HEK293 (cell line): ENCODE measurements at regions of chr18 and their contacts with region 1.

Region 1: DNA sequence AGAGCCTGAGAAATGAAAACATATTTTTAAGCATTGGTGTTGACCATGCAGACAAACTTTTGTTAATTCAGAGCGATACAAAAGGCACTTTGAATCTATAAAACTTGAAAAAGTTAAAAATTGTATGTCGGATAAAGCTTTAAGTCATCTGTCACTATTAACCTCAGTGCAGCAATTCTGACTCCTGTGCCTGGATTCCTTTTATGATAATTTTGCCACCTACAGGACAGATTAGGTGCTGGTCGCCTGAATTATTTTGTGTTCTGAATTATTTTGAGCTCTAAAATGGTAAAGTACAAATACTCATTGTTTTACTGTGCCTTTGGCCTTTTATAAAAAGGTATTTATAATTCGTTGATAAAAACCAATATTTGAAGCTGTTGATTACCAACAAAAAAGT is 19.4 kb upstream of the RNF138 start:
- H3K4me3 ChIP-seq: no peak overlapping the region
- H3K27ac ChIP-seq: no peak overlapping the region
- H3K4me1 ChIP-seq: no peaks in the 10 kb centered on the region
- CTCF ChIP-seq: no peak

Region 2: GRCh38 chr18:32083781-32084180 is 11.5 kb after region 1 on chr18:
- CTCF ChIA-PET with region 1: interaction called, 12 read pairs
- POLR2A ChIA-PET with region 1: no interaction called
- H3K4me3 ChIP-seq: no peak overlapping the region
- H3K27ac ChIP-seq: no peak overlapping the region
- H3K4me1 ChIP-seq: no peaks in the 10 kb centered on the region
- CTCF ChIP-seq: no peak